Activated CD8-positive, alpha-beta T cell treated with anti-CD3 and anti-CD28 coated beads for 36 hours (primary cell): ENCODE measurements at regions of chr16 and their contacts with region 1.

Region 1: DNA sequence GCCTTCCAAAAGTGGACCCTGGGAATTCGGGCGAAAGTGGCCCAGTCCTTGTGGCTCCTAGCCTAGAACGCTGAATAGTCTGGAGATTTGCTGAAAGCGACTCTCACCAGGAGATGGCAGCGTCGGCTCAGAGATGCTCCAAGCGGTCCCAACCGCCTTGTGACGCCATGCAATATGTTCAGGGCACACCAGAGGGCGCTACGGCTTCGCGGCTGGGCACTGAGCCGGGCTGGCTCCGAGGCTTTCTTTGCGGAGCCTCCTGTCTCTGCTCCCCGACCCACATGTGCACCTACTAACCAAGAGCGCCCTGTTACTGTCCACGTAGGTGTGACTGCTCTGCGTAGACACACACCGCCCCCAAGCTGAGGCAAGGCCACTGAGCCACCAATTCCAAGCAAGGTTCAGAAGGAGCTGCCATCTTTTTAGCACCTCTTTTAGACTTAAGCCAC is 36.9 kb downstream of the SYCE1L start:
- DNase-seq: peak; percentile 92
- ATAC-seq: peak; percentile 100
- H3K4me3 Mint-ChIP-seq: peak overlapping the region; percentile 21
- H3K27ac Mint-ChIP-seq: no peak overlapping the region
- H3K4me1 Mint-ChIP-seq: peaks cover 3% of the 10 kb centered on the region
- H3K27me3 Mint-ChIP-seq: peaks cover 16% of the 10 kb centered on the region
- CTCF ChIP-seq: peak; percentile 98

Region 2: GRCh38 chr16:77002644-77003043 is 233.4 kb before region 1 on chr16:
- CTCF ChIA-PET with region 1: no interaction called
- POLR2A ChIA-PET with region 1: no interaction called
- intact Hi-C with region 1: no loop called
- DNase-seq: no peak
- ATAC-seq: no peak
- H3K4me3 Mint-ChIP-seq: no peak overlapping the region
- H3K27ac Mint-ChIP-seq: no peak overlapping the region
- H3K4me1 Mint-ChIP-seq: no peaks in the 10 kb centered on the region
- H3K27me3 Mint-ChIP-seq: peaks cover 1% of the 10 kb centered on the region
- CTCF ChIP-seq: no peak

Region 3: GRCh38 chr16:77376358-77376757 is 140.3 kb after region 1 on chr16:
- CTCF ChIA-PET with region 1: interaction called, 3 read pairs
- POLR2A ChIA-PET with region 1: no interaction called
- intact Hi-C with region 1: loop called (anchors 5 kb)
- DNase-seq: peak; percentile 36
- ATAC-seq: no peak
- H3K4me3 Mint-ChIP-seq: no peak overlapping the region
- H3K27ac Mint-ChIP-seq: no peak overlapping the region
- H3K4me1 Mint-ChIP-seq: no peaks in the 10 kb centered on the region
- H3K27me3 Mint-ChIP-seq: peaks cover 4% of the 10 kb centered on the region
- CTCF ChIP-seq: no peak

Region 4: DNA sequence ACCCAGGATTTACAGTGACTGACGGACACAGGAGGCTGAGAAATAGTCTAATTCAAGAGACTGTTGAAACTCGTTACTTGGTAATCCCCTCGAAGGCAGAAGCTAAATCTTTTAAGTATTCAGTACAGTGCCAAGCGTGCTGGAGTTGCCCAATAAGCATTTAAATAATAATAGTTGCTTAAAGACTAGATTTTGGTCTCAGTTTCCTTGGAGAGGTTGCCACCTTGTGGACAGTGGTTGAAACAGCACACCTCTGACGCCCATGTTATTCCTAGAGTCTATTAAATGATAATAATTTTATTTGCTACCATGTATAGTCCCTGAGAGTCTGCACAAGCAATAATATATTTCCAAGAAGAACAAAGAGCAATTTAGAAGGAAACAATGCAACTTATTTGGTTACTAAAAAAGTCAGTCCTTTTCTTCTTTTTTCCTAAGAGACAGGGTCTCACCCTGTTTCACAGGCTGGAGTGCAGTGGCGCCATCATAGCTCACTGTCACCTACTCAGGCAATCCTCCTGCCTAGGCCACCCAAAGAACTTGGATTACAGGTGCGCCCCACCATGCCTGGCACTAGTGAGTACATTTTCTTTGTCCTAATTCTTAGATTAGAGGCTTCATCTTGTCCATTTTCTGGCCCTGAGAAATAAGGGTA is 348.2 kb after region 1 on chr16:
- CTCF ChIA-PET with region 1: interaction called, 146 read pairs
- POLR2A ChIA-PET with region 1: interaction called, 3 read pairs
- intact Hi-C with region 1: loop called (anchors 1 kb)
- DNase-seq: peak; percentile 60
- ATAC-seq: peak; percentile 74
- H3K4me3 Mint-ChIP-seq: no peak overlapping the region
- H3K27ac Mint-ChIP-seq: no peak overlapping the region
- H3K4me1 Mint-ChIP-seq: peaks cover 3% of the 10 kb centered on the region
- H3K27me3 Mint-ChIP-seq: peaks cover 11% of the 10 kb centered on the region
- CTCF ChIP-seq: peak; percentile 82